Activated CD4-positive, alpha-beta memory T cell treated with anti-CD3 and anti-CD28 coated beads for 36 hours (primary cell): ENCODE measurements at regions of chr1 and their contacts with region 1.

Region 1: DNA sequence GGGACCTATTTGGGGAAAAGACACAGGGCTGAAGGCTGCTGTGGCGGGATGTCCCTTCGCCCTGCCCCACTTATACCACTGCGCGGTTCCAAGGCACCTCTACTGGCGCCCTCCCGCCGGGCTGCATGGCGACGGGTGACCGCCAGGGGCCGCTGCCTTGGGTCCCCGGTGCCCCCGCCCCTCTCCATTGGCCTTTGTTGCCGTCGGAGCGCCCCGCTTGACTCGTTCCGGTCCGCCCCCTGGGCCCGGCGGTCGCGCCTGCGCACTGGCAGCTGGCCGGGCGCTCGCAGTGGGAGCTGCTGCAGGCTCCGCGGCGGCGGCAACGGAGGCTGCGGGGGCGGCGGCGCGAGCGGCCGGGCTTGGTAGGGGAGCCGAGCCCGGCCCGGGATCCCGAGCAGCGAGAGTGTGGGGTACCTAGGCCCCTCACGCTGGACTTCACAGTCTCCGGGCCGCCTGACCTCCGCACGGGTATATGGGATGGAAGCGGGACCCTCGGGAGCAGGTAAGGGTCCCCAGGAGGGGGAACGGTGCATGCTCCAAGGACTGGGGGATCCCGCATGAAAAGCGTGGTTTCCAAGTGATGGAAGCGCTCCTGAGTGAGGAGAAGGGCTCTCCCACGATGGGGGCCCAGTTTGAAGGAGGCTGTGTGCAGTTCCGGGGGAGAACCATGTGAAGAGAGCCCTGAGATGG is at the start of gene AGO1:
- DNase-seq: peak; percentile 98
- H3K4me3 Mint-ChIP-seq: peak within 1 kb of the TSS; percentile 92
- H3K27ac Mint-ChIP-seq: peak within 1 kb of the TSS; percentile 61
- H3K4me1 Mint-ChIP-seq: peaks cover 46% of the 10 kb centered on the region
- H3K27me3 Mint-ChIP-seq: no peaks in the 10 kb centered on the region
- total RNA-seq, gene AGO1: 28.8 TPM

Region 2: GRCh38 chr1:35622510-35623178 is 260.4 kb before region 1 on chr1:
- CTCF ChIA-PET with region 1: no interaction called
- POLR2A ChIA-PET with region 1: no interaction called
- intact Hi-C with region 1: no loop called
- DNase-seq: no peak
- H3K4me3 Mint-ChIP-seq: no peak overlapping the region
- H3K27ac Mint-ChIP-seq: no peak overlapping the region
- H3K4me1 Mint-ChIP-seq: peaks cover 7% of the 10 kb centered on the region
- H3K27me3 Mint-ChIP-seq: no peaks in the 10 kb centered on the region

Region 3: GRCh38 chr1:35777109-35777508 is 106.0 kb before region 1 on chr1:
- CTCF ChIA-PET with region 1: no interaction called
- POLR2A ChIA-PET with region 1: no interaction called
- intact Hi-C with region 1: no loop called
- DNase-seq: no peak
- H3K4me3 Mint-ChIP-seq: no peak overlapping the region
- H3K27ac Mint-ChIP-seq: no peak overlapping the region
- H3K4me1 Mint-ChIP-seq: peaks cover 5% of the 10 kb centered on the region
- H3K27me3 Mint-ChIP-seq: no peaks in the 10 kb centered on the region

Region 4: GRCh38 chr1:35945327-35945726 is 62.2 kb after region 1 on chr1:
- CTCF ChIA-PET with region 1: interaction called, 10 read pairs
- POLR2A ChIA-PET with region 1: no interaction called
- intact Hi-C with region 1: no loop called
- DNase-seq: no peak
- H3K4me3 Mint-ChIP-seq: no peak overlapping the region
- H3K27ac Mint-ChIP-seq: no peak overlapping the region
- H3K4me1 Mint-ChIP-seq: peaks cover 53% of the 10 kb centered on the region
- H3K27me3 Mint-ChIP-seq: no peaks in the 10 kb centered on the region